Cardiac septum (tissue), 1 donor: ENCODE measurements at regions of chr5 and their contacts with region 1.

Region 1: DNA sequence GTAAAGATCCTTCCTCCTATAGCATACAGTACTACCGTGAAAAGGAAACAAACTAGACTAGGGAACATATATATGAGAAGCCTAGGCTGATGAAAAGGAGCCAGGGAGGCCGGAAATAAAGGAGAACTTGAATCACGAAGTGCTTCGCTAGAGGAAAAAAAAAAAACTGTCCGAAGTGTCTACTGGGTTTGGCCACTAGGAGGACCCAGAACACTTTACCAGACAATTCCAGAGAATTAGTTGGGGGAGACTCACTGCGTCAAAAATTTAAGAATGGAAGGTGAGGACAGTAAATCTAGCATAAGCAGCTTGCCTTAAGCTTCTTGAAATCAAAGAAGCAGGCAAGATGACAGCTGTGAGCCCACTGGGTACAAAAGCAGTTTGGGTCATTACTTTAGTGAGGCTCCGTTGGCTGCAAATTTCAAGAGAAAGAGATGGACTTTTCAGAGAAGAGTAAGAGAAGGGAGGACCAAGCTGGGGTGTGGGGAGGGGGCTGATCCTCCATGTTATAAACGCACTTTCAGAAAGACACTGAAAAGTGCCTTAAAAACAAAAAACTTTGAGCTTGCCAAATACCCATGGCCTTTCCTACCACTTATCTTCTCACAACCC is 47.4 kb downstream of the P4HA2 start:
- DNase-seq: no peak

Region 2: DNA sequence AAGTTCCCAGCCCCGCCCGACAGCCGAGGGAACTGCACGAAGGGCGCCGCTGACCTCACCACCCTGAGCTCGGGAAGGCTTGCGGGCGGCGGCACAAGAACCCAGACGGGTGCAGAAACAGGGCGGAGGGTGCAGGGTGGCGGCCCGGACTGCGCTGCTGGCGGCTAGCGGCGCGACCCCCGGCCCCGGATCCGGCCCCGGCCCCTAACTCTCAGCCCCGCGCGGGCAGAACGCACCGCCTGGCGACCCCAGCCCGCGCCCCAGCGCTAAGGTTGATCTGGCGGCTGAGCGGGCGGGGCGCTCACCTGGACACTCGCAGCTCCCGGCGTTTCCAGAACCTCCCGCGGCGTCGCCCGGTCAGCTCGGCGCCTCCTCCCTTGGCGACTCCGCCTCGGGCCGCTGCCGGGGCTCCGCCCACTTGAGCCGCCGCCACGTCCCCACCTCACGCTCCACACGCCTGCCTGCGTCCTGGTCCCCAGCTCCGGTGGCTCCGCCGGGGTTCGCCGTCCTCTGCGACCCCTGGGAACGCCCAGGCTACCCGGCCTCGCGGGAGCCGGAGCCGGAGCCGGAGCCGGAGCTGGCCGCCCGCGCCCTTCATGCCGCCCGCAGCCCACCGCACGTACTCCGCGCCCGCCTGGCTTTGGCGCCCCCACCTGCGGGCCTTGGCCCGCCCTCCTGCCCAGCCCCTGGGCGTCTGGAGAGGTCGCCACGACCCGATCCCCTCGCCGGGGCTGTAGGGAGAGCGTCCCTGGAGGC is 47.4 kb after region 1 on chr5 and contains the start of gene P4HA2:
- intact Hi-C with region 1: no loop called
- DNase-seq: peak; percentile 93
- total RNA-seq, gene P4HA2: 50.5 TPM

Region 3: DNA sequence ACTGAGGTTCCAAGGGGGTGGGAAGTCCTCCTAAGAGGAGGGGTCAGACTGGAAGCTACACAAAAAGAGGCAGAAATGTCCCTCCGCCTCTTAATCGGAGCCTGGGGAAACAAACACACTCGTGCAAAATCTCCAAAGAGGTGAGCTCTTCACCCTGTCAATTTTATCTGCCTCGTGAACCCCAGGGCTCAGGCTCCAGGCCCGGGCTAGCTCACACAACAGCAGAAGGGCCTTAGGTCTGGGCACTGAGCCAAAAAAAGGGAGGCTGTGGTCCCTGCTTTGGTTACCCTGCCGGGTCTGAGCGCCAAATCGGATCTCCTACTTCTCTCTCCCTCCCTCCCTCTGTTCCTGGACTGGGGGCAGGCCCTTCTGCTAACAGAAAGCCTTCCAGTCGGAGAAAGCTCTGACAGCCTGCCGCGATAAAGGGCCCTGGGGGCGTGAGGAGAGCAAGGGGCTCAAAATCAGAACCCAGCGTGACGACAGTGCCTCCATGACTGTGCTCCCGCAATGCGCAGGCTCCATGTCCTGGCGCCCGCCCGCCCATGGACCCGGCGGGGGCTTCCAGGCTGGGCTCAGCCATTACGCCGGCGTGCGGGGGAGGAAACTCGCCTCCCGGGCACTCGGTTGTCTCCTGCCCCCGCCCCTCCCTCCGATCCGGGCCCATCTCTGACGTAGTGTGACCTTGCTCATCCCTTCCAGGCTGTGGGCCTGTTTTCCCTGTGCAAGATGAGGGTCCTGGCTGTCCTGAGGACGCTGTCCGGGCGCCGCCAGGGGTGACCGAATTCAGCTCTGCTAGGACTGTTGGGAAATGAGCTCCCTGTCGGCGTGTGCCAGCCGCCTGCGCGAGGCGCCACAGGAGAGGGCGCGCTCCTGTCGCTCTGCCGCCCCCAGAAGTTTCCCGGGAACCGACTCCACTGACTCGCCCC is 113.1 kb after region 1 on chr5:
- intact Hi-C with region 1: no loop called
- DNase-seq: peak; percentile 94

Region 4: GRCh38 chr5:132369474-132370180 is 189.4 kb after region 1 on chr5 and contains the start of gene SLC22A5:
- intact Hi-C with region 1: loop called (anchors 5 kb)
- DNase-seq: peak; percentile 89
- total RNA-seq, gene SLC22A5: 9.2 TPM